RWPE1 (cell line): ENCODE measurements at regions of chr12 and their contacts with region 1.

Region 1: GRCh38 chr12:54398995-54399793 is 14.7 kb upstream of the ZNF385A start:
- DNase-seq: peak; percentile 91
- H3K27ac ChIP-seq: peak overlapping the region; percentile 53
- CTCF ChIP-seq: peak; percentile 98

Region 2: GRCh38 chr12:54411391-54412241 is 12.4 kb after region 1 on chr12:
- CTCF ChIA-PET with region 1: interaction called, 15 read pairs
- POLR2A ChIA-PET with region 1: interaction called, 3 read pairs
- DNase-seq: peak; percentile 91
- H3K27ac ChIP-seq: peak overlapping the region; percentile 89
- CTCF ChIP-seq: no peak

Region 3: GRCh38 chr12:54419088-54419892 is 20.1 kb after region 1 on chr12 and contains the start of gene ITGA5:
- CTCF ChIA-PET with region 1: interaction called, 23 read pairs
- POLR2A ChIA-PET with region 1: no interaction called
- DNase-seq: peak; percentile 93
- H3K27ac ChIP-seq: peak within 1 kb of the TSS; percentile 94
- CTCF ChIP-seq: no peak

Region 4: DNA sequence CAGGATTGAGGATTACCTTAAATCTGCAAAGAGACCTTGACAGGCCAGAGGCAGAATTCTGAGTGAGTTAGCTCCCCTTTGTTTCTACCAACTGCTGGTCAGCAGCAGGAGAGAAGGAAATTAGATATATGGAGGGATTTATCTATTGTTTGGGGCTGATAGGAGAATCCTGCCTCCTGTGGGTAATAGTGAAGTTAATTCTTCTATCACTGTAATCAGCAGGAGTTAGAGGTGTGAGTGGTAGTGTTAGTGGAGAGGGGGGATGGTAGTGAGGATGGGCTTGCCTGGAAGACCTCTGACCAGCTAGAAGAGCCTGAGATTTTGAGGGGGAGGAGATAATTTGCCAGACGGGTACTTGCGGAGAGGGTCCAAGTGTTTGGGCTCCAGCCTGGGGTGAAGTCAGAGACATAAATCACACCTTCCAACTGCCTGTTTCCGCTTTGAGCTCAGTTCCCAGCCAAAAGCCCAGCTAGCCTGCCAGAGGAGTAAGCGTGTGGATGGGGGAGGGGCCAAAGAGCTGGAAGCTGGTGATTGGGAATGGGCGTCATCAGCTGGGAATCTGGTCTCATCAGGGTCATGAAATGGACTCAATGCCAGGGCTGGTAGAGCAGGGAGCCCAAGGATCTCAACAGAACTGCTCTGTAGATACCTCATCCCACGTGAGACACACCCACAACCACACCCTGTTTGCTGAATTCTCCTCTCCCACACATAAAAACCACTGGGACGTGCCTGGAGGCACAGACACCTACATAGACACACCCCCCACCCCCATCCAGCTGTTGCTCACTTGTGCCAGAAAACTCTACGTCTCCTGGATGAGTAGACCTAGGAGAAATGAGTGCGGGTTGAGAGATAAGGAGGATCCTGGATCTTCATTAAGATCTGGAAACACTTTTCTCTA is 33.0 kb after region 1 on chr12:
- CTCF ChIA-PET with region 1: interaction called, 170 read pairs
- POLR2A ChIA-PET with region 1: no interaction called
- DNase-seq: peak; percentile 93
- H3K27ac ChIP-seq: peak overlapping the region; percentile 86
- CTCF ChIP-seq: no peak

Region 5: GRCh38 chr12:54439521-54440255 is 40.5 kb after region 1 on chr12:
- CTCF ChIA-PET with region 1: interaction called, 170 read pairs
- POLR2A ChIA-PET with region 1: interaction called, 3 read pairs
- DNase-seq: peak; percentile 69
- H3K27ac ChIP-seq: no peak overlapping the region
- CTCF ChIP-seq: peak; percentile 75

Region 6: DNA sequence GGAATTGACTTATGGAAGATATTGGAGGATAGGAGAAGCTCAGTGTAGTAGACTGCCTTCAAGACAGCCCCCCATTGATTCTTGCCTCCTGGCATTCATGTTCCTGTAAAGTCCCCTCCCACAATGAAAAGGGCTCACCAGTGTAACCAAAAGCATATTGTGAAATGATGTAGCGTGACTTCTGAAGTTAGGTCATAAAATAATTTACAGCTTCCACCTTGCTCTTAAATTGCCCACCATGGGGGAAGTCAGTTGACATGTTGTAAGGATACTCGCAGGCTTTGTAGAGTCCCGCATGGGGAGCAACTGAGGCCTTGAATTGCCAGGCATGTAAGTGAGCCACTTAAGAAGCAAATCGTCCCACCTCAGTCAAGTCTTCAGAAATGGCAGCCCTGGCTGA is 49.1 kb after region 1 on chr12:
- CTCF ChIA-PET with region 1: interaction called, 29 read pairs
- POLR2A ChIA-PET with region 1: no interaction called
- DNase-seq: no peak
- H3K27ac ChIP-seq: no peak overlapping the region
- CTCF ChIP-seq: no peak